ENCODE measurements at regions of chr18 and their contacts with region 1.

Region 1: DNA sequence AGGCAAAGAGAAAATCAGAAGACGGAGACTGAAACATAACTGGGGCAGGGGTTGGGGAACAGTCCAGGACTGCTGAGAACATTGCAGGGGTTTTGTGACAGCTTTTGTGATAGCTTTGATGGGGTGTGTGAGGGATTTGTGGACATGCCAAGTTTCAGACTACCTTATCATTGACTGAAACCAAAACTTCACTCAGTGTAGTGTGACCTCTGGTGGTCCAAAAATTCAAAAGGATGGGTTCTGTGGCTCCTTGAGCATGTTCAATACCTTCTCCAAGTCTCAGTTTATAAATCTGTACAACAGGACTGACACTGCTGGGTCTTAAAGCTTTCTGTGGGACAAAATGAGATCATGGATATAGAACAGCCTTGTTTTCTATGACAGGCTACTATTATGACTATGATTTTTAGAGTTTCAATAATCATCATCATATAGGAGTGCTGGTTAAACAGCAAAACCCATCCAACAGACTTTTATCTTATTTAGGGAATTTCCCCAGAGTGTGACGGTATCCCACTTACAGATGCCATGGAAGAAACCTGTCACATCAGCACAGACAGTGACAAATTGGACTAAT is 259.2 kb upstream of the SLC14A2 start:
- DNase-seq: no peak
- H3K4me3 ChIP-seq: no peak overlapping the region
- H3K27ac ChIP-seq: no peak overlapping the region
- H3K4me1 ChIP-seq: peaks cover 15% of the 10 kb centered on the region
- H3K27me3 ChIP-seq: peaks cover 5% of the 10 kb centered on the region
- CTCF ChIP-seq: peak; percentile 44

Region 2: DNA sequence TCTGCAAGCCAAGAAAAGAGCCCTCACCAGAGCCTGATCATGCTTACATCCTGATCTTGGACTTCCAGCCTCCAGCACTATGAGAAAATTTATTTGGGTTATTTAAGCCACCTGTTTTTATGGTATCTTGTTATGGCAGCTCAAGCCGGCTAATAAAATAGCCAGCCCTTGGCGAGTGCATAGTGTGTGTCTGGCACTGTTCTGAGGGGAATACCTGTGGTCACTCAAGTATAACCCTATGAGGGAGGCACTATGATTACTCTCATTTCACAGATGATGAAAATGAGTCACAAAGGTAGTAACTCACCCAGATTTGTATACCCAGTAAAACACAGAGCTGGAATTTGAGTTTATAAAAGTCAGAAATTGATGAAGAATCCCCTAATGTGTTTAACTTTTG is 1232.3 kb before region 1 on chr18:
- intact Hi-C with region 1: loop called (anchors 10 kb)
- DNase-seq: no peak
- H3K4me3 ChIP-seq: no peak overlapping the region
- H3K27ac ChIP-seq: no peak overlapping the region
- H3K4me1 ChIP-seq: no peaks in the 10 kb centered on the region
- H3K27me3 ChIP-seq: peaks cover 3% of the 10 kb centered on the region
- CTCF ChIP-seq: no peak

Region 3: DNA sequence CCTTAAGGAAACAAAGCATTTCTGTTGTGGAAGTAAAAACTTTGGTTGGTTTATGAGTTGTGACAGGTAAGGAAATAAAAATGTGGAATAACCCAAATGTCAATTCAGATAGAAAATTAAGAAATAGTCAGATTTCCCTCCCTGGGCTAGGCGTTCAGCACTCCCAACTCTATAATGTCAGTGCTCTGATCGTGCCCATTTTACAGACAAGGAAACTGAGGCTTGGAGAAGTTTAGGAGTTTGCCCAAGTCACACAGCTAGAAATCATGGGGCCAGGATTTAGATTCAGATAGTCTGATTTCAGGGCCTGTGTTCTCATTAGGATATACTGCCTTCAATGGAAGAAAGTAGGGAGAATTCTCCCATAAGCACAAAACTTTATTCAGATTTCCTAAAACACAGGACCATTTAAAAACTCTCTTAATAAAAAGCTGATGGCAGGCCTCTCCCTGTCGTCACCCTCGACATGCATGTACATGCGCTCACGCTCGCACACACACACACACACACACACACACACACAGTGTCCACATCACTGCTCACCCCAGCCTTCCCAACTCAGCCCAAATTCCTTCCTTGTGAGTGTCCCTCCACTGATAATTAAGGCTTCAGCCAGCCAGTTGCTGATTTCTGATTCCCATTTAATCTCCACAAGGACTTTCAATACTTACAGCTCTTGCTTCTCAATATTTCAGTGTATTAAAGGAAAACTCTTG is 210.2 kb after region 1 on chr18:
- intact Hi-C with region 1: no loop called
- DNase-seq: peak; percentile 42
- H3K4me3 ChIP-seq: peak overlapping the region; percentile 32
- H3K27ac ChIP-seq: peak overlapping the region; percentile 60
- H3K4me1 ChIP-seq: peaks cover 20% of the 10 kb centered on the region
- H3K27me3 ChIP-seq: peaks cover 13% of the 10 kb centered on the region
- CTCF ChIP-seq: no peak

Region 4: GRCh38 chr18:46700066-46700824 is 1344.2 kb after region 1 on chr18:
- intact Hi-C with region 1: no loop called
- DNase-seq: no peak
- H3K4me3 ChIP-seq: no peak overlapping the region
- H3K27ac ChIP-seq: no peak overlapping the region
- H3K4me1 ChIP-seq: peaks cover 12% of the 10 kb centered on the region
- H3K27me3 ChIP-seq: no peaks in the 10 kb centered on the region
- CTCF ChIP-seq: no peak

Measured in left ventricle myocardium inferior (tissue), 1 donor.